K562 (cell line): ENCODE measurements at regions of chr14 and their contacts with region 1.

Region 1: GRCh38 chr14:24481622-24482324 is 26.3 kb downstream of the CMA1 start:
- DNase-seq: peak; percentile 58 to 84 (median 72)
- ATAC-seq: peak; percentile 100
- H3K4me3 ChIP-seq: no peak overlapping the region
- H3K27ac ChIP-seq: no peak overlapping the region
- H3K4me1 ChIP-seq: peaks cover 0 to 6% of the 10 kb centered on the region in 2 experiments; a peak in 2 of 5 replicates
- H3K27me3 ChIP-seq: no peaks in the 10 kb centered on the region
- CTCF ChIP-seq: peak; percentile 81 to 83 (median 82)
- EP300 ChIP-seq: no peak
- POLR2A ChIP-seq: no peak
- RAD21 ChIP-seq: peak; percentile 38 to 75; a peak in 3 of 4 replicates

Region 2: DNA sequence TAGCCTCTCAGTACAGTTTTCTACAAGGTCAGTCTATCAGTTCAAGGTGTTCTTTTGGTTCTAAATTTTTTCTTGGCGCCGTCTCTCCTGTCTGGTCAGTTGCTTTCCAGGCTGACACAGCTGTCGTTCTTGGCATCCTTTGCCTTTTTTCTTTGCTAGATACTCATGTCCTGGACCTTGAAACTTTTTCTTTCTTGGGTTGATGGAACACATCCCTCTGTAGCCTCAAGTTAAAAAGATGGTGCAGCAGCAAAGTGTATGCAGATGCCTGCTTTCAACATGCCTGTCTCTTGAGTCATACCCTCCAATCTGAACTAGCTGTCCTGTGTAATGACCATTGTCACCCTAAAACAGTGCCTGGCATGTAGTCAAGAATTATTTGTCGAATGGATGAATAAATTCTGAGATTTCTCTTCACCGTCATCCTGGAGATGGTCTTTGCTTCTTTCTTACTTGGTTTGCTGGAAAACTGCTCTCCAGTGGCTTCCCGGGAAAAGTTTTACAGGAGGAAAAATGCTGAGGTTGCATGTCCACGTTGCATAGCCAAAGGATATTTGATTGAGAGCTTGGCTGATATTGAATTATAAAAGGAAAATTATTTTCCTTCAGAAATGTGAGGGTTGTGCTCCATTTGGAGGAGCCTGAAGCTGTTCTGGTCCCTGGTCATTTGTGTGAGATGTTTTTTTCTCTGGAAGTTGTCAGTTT is 78.3 kb before region 1 on chr14:
- CTCF ChIA-PET with region 1: no interaction called
- POLR2A ChIA-PET with region 1: no interaction called
- in situ Hi-C with region 1: no loop called
- intact Hi-C with region 1: no loop called
- DNase-seq: no peak
- ATAC-seq: no peak
- H3K4me3 ChIP-seq: no peak overlapping the region
- H3K27ac ChIP-seq: no peak overlapping the region
- H3K4me1 ChIP-seq: peaks cover 0 to 15% of the 10 kb centered on the region in 2 experiments; a peak in 3 of 5 replicates
- H3K27me3 ChIP-seq: no peaks in the 10 kb centered on the region; a peak in 1 of 5 replicates
- CTCF ChIP-seq: no peak
- EP300 ChIP-seq: no peak
- POLR2A ChIP-seq: no peak
- RAD21 ChIP-seq: no peak

Region 3: DNA sequence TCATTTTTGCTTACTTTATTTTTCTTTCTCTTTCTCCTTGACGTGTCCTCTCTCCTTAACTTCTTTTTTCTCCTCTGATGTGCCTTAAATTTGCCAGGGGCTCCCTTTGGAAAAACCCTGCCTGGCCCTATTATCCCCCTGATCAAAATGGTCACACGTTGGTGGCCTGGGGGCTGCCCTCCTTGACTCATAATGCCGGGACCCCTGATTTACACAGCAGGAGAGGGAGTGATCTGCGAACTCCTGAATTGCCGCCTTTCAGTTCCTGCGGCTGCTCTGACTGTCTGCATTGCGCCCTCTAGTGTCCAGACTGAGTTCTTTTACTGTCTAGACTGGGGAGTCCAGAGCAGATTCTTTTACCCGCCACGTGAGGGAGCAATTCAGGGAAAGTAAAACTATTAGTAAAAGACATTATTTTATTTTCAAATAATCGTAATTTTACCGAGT is 197.1 kb after region 1 on chr14:
- CTCF ChIA-PET with region 1: interaction called, 9 read pairs
- POLR2A ChIA-PET with region 1: no interaction called
- in situ Hi-C with region 1: no loop called
- intact Hi-C with region 1: loop called (anchors 1 kb)
- DNase-seq: peak; percentile 69 to 87 (median 72)
- ATAC-seq: peak; percentile 99
- H3K4me3 ChIP-seq: peak overlapping the region; percentile 29; the same call in 1 of the 2 replicates
- H3K27ac ChIP-seq: no peak overlapping the region
- H3K4me1 ChIP-seq: no peaks in the 10 kb centered on the region
- H3K27me3 ChIP-seq: no peaks in the 10 kb centered on the region
- CTCF ChIP-seq: peak; percentile 96 to 100 (median 99)
- EP300 ChIP-seq: no peak
- POLR2A ChIP-seq: no peak
- RAD21 ChIP-seq: peak; percentile 65 to 72